GM12878 (cell line): ENCODE measurements at regions of chr16 and their contacts with region 1.

Region 1: GRCh38 chr16:75550211-75550662 is 5.8 kb downstream of the TMEM231 start:
- DNase-seq: peak; percentile 69
- ATAC-seq: peak; percentile 89
- H3K4me3 ChIP-seq: no peak overlapping the region
- H3K27ac ChIP-seq: no peak overlapping the region
- H3K4me1 ChIP-seq: peaks cover 8% of the 10 kb centered on the region
- H3K27me3 ChIP-seq: no peaks in the 10 kb centered on the region
- CTCF ChIP-seq: peak; percentile 70 to 78 (median 77)
- EP300 ChIP-seq: no peak
- POLR2A ChIP-seq: no peak
- RAD21 ChIP-seq: peak; percentile 85

Region 2: DNA sequence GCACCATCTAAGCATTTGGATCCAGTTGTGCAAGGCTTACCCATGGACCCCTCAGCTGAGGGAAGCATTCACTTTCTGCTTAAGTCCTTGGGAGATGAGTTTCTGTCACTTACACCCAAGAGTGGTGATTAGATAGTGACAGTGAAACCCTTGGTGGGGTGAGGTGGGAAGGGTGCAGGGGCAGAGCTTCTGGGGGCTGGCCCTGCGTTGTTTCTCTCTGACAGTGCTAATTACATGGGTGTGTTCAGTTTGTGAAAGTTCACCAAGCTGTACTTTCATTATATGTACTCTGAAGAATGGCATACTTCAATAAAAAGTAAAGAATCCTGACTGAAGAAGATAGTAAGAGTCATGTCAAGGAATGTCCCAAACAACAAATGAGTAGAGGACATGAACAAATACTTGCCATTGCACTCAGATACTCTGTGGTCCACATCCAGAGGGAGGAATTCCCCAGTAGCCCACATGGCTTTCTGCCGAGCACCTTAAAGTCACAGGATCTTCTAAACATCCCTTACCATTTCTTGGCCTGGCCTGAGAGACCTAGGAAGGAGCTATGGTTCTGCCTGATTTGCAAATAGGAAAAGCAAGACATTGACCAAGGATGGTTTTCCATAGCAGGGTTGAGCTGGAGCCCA is 63.4 kb before region 1 on chr16:
- CTCF ChIA-PET with region 1: interaction called, 5 read pairs
- POLR2A ChIA-PET with region 1: interaction called, 3 read pairs
- RAD21 ChIA-PET with region 1: interaction called, 3 read pairs
- SMC1A ChIA-PET with region 1: interaction called, 11 read pairs
- in situ Hi-C with region 1: no loop called
- intact Hi-C with region 1: no loop called
- DNase-seq: peak; percentile 45
- ATAC-seq: peak; percentile 83
- H3K4me3 ChIP-seq: no peak overlapping the region
- H3K27ac ChIP-seq: peak overlapping the region; percentile 74
- H3K4me1 ChIP-seq: peaks cover 41% of the 10 kb centered on the region
- H3K27me3 ChIP-seq: no peaks in the 10 kb centered on the region
- CTCF ChIP-seq: no peak
- EP300 ChIP-seq: no peak
- POLR2A ChIP-seq: no peak
- RAD21 ChIP-seq: no peak

Region 3: GRCh38 chr16:75506567-75506966 is 43.7 kb before region 1 on chr16:
- CTCF ChIA-PET with region 1: interaction called, 11 read pairs
- POLR2A ChIA-PET with region 1: no interaction called
- RAD21 ChIA-PET with region 1: interaction called, 3 read pairs
- SMC1A ChIA-PET with region 1: interaction called, 3 read pairs
- in situ Hi-C with region 1: no loop called
- intact Hi-C with region 1: no loop called
- DNase-seq: no peak
- ATAC-seq: no peak
- H3K4me3 ChIP-seq: no peak overlapping the region
- H3K27ac ChIP-seq: no peak overlapping the region
- H3K4me1 ChIP-seq: no peaks in the 10 kb centered on the region
- H3K27me3 ChIP-seq: no peaks in the 10 kb centered on the region
- CTCF ChIP-seq: no peak
- EP300 ChIP-seq: no peak
- POLR2A ChIP-seq: no peak
- RAD21 ChIP-seq: no peak

Region 4: GRCh38 chr16:75519881-75520280 is 30.4 kb before region 1 on chr16:
- CTCF ChIA-PET with region 1: interaction called, 32 read pairs
- POLR2A ChIA-PET with region 1: interaction called, 7 read pairs
- RAD21 ChIA-PET with region 1: interaction called, 5 read pairs
- SMC1A ChIA-PET with region 1: interaction called, 4 read pairs
- in situ Hi-C with region 1: no loop called
- intact Hi-C with region 1: loop called (anchors 5 kb)
- DNase-seq: no peak
- ATAC-seq: no peak
- H3K4me3 ChIP-seq: no peak overlapping the region
- H3K27ac ChIP-seq: no peak overlapping the region
- H3K4me1 ChIP-seq: no peaks in the 10 kb centered on the region
- H3K27me3 ChIP-seq: no peaks in the 10 kb centered on the region
- CTCF ChIP-seq: no peak
- EP300 ChIP-seq: no peak
- POLR2A ChIP-seq: no peak
- RAD21 ChIP-seq: no peak